Activated T-helper 1 cell treated with anti-CD3 and anti-CD28 coated beads, Interleukin-12 subunit alpha, Interleukin-12 subunit beta, Interleukin-2, Interleukin-4 antibody, amounts not matched to agents 30 ng/mL and 10 ng/mL and 1 ng/mL, durations not matched to agents 14 hours and 24 hours and 36 hours (primary cell): ENCODE measurements at regions of chr1 and their contacts with region 1.

Region 1: DNA sequence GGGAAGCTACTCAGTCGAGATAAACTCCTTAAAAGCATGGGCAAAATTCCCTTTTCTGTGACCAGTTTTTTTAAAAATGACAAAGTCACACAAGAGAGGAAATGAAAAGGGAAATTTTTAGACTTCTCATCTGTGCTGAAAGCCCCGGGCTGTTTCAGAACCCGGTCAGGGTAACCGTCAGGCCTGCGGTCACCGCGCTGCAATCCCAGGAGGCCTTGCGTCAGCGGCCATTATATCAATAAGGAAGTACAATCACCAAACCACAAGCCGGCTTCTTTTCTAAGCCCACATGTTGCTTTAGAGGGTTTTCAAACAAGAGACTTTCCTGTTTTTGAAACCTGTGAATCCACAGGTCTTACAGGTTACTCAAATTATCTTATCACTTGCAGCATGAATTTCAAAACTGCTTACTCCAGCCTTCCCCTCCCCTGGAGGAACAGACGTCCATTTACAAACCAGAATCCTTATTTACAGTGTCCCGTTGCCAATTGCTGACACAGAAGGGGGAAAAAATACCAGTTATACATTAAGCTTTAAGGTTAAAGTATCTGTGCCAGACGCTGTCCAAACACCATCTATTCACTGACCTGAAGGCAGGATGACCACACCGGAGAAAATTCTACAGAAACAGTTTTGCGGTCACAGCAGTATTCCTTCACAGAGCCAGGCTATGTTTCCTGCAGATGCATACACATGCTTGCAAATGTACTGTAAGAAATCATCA is 165.3 kb downstream of the TOMM20 start:
- DNase-seq: peak; percentile 87
- H3K4me3 Mint-ChIP-seq: peak overlapping the region; percentile 73
- H3K27ac Mint-ChIP-seq: peak overlapping the region; percentile 93
- H3K4me1 Mint-ChIP-seq: peaks cover 76% of the 10 kb centered on the region
- H3K27me3 Mint-ChIP-seq: no peaks in the 10 kb centered on the region

Region 2: DNA sequence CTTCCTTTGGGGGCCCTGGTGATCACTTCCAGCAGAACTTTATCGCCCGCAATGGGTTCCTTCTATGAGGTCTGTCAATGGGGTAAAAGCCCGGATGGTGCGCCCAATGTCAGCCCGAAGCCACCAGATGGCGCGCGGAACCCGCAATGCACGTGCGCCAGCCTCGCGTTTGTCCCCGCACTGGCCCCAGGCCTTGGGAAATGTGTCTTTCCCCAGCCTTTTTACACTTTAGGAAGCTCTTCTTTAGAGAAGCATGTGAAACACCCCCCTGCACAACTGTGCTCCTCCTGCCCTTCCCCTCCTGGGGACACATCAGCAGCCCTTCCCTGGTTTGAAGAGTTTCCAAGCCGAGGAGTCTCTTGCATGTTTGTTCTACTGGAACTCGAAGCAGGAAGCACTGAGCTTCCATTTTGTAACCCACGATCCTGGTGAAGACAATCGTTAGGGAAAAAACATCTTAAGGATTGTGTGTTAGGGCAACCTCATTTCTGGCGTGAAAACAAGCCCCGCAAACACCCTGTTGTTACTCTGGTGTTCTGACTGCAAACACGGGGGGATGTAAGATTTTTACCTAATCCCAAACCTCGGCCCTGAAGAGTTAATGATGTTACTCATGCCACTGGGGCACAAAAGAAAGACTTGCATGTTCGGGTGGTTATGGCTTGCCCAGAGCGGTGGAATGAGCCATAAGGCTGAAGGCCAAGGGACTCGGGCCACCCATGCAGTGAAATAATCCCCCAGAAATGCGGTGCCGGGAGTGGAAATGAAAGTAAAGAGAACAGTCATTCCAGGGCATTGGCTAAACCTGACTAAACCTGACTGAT is 464.0 kb before region 1 on chr1:
- intact Hi-C with region 1: loop called (anchors 1 kb)
- DNase-seq: peak; percentile 78
- H3K4me3 Mint-ChIP-seq: no peak overlapping the region
- H3K27ac Mint-ChIP-seq: peak overlapping the region; percentile 80
- H3K4me1 Mint-ChIP-seq: peaks cover 83% of the 10 kb centered on the region
- H3K27me3 Mint-ChIP-seq: no peaks in the 10 kb centered on the region

Region 3: GRCh38 chr1:234772345-234773147 is 190.8 kb before region 1 on chr1:
- intact Hi-C with region 1: loop called (anchors 1 kb)
- DNase-seq: peak; percentile 83
- H3K4me3 Mint-ChIP-seq: peak overlapping the region; percentile 80
- H3K27ac Mint-ChIP-seq: peak overlapping the region; percentile 100
- H3K4me1 Mint-ChIP-seq: peaks cover 56% of the 10 kb centered on the region
- H3K27me3 Mint-ChIP-seq: no peaks in the 10 kb centered on the region

Region 4: DNA sequence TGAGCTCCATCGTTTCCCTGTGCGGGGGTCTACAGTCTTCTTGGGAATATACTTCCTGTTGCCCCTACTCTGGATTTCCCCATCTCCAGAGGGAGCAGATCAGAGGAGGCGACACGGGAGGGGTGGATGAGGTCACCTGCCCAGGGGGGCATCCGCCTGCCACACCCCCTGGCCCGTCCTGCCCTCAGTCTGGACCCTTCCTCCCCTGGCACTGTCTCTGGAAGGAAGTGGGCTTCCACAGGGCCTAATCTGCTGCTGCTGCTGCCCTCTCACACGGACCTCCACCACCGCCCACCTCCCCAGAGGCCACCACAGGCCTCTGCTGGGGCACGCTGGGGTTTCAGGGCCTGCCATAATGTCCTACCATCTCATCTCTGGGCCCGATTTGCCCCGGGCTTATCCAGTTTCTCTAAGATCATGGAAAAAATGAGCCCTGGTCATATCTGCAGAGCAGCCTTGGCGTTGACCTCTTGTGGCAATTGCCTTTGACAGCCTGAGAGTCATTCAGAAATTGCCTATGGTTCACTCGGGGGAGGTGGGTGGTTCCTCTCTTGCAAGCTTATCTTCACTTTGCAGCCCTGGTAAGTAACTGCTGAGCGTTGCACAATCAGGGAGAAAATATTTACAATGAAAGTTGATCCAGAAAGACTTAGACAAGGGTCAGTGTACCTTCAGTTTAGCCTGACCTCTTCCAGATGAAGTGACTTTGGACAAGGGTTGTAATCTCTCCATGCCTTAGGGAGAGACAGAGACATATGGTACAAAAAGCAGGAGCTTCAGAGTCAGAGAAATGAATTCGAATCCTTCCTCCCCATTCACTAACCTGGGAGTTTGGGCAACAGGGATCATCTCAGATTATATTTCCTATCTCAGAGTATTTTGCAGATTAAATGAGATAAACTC is 87.1 kb before region 1 on chr1:
- intact Hi-C with region 1: loop called (anchors 2 kb)
- DNase-seq: no peak
- H3K4me3 Mint-ChIP-seq: peak overlapping the region; percentile 11
- H3K27ac Mint-ChIP-seq: peak overlapping the region; percentile 88
- H3K4me1 Mint-ChIP-seq: peaks cover 55% of the 10 kb centered on the region
- H3K27me3 Mint-ChIP-seq: no peaks in the 10 kb centered on the region

Region 5: GRCh38 chr1:234933475-234933874 is 29.9 kb before region 1 on chr1:
- intact Hi-C with region 1: loop called (anchors 1 kb)
- DNase-seq: no peak
- H3K4me3 Mint-ChIP-seq: peak overlapping the region; percentile 16
- H3K27ac Mint-ChIP-seq: peak overlapping the region; percentile 78
- H3K4me1 Mint-ChIP-seq: peaks cover 68% of the 10 kb centered on the region
- H3K27me3 Mint-ChIP-seq: no peaks in the 10 kb centered on the region

Region 6: GRCh38 chr1:234987415-234988154 is 24.2 kb after region 1 on chr1:
- intact Hi-C with region 1: loop called (anchors 1 kb)
- DNase-seq: no peak
- H3K4me3 Mint-ChIP-seq: peak overlapping the region; percentile 53
- H3K27ac Mint-ChIP-seq: peak overlapping the region; percentile 95
- H3K4me1 Mint-ChIP-seq: peaks cover 83% of the 10 kb centered on the region
- H3K27me3 Mint-ChIP-seq: no peaks in the 10 kb centered on the region

Region 7: GRCh38 chr1:235075188-235075926 is 112.0 kb after region 1 on chr1:
- intact Hi-C with region 1: loop called (anchors 1 kb)
- DNase-seq: peak; percentile 34
- H3K4me3 Mint-ChIP-seq: peak overlapping the region; percentile 71
- H3K27ac Mint-ChIP-seq: peak overlapping the region; percentile 99
- H3K4me1 Mint-ChIP-seq: peaks cover 42% of the 10 kb centered on the region
- H3K27me3 Mint-ChIP-seq: no peaks in the 10 kb centered on the region